WTC11 (cell line): ENCODE measurements at regions of chr5 and their contacts with region 1.

Region 1: DNA sequence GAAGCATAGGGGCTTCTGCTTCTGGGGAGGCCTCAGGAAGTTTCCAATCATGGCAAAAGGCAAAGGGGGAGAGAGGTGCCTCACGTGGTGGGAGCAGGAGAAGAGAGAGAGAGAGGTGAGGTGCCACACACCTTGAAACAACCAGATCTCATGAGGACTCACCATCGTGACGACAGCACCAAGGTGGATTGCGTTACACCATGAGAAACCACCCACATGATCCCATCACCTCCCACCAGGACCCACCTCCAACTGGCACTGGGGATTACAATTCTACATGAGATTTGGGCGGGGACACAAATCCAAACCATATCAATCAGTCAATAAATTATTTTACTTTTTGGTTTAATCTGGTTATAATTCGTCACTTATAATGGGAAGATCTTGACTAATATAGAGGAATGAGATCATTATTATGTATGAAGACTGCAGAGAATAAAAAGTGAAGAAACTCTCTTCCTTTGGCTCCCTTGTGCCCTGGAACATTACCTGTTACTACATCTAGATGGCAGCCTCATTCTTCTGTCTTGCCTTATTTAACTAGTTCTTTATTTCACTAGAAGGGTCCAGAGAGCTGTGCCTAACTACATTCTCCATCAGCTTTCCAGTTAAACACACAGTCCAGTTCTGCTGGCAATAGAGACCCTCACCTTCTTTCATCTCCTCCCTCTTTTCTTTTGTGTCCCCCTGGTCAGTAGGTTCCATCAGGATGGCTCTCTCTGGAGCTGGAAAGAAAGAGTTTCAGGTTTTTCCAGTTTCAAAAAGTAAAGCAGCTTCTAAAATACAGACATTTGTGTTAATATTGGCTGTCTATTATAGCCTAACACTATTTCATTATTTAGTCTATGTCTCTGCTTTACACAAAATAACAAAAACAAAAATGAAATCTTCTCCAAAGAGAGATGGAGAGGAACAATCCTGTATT is 21.7 kb upstream of the SPINK7 start:
- DNase-seq: peak; percentile 14
- ATAC-seq: peak; percentile 95
- H3K4me3 Mint-ChIP-seq: peak overlapping the region; percentile 2; the same call in 1 of the 2 replicates
- H3K27ac Mint-ChIP-seq: no peak overlapping the region
- H3K4me1 Mint-ChIP-seq: peaks cover 5% of the 10 kb centered on the region
- H3K27me3 Mint-ChIP-seq: no peaks in the 10 kb centered on the region; the same call in 1 of the 2 replicates
- CTCF ChIP-seq: no peak

Region 2: DNA sequence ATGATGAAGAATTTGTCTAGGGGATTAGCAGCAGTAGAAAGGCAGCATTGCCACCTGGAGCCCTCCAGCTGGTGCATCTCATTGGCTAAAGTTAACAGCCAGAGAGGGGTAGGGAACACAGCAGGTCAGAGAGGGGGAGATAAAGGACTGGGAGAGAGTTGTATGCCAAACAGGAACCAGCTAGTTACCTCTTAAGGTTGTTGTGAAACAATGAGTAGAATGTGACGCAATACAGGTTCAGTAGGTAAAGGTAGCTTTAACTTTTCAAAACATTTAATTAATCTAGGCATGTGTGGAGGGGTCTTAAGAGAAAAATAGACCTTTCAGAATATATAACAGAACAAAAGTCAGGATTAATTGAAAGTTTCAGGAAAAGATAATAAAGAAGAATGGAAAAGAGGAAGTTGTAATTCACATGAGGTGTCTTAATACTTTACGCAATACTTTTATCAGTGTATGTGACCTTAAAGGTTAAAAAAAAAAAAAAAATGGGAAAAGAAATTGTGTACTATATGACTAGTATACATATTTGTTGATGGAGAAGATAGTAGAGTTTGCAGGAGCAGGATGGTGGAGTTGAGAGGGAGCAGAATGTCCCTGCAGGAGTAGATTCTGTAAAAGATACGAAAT is 107.5 kb after region 1 on chr5:
- CTCF ChIA-PET with region 1: interaction called, 16 read pairs
- POLR2A ChIA-PET with region 1: no interaction called
- DNase-seq: peak; percentile 61
- ATAC-seq: peak; percentile 99
- H3K4me3 Mint-ChIP-seq: peak overlapping the region; percentile 24
- H3K27ac Mint-ChIP-seq: peak overlapping the region; percentile 77
- H3K4me1 Mint-ChIP-seq: peaks cover 41% of the 10 kb centered on the region
- H3K27me3 Mint-ChIP-seq: no peaks in the 10 kb centered on the region
- CTCF ChIP-seq: no peak